ENCODE measurements at regions of chr4 and their contacts with region 1.

Region 1: GRCh38 chr4:54233277-54233696 is 4.2 kb downstream of the PDGFRA start:
- DNase-seq: peak; percentile 68
- ATAC-seq: peak; percentile 80
- H3K4me3 Mint-ChIP-seq: peak overlapping the region; percentile 82
- H3K27ac Mint-ChIP-seq: no peak overlapping the region
- H3K4me1 Mint-ChIP-seq: peaks cover 30% of the 10 kb centered on the region
- H3K27me3 Mint-ChIP-seq: peaks cover 54% of the 10 kb centered on the region
- CTCF ChIP-seq: peak; percentile 17

Region 2: DNA sequence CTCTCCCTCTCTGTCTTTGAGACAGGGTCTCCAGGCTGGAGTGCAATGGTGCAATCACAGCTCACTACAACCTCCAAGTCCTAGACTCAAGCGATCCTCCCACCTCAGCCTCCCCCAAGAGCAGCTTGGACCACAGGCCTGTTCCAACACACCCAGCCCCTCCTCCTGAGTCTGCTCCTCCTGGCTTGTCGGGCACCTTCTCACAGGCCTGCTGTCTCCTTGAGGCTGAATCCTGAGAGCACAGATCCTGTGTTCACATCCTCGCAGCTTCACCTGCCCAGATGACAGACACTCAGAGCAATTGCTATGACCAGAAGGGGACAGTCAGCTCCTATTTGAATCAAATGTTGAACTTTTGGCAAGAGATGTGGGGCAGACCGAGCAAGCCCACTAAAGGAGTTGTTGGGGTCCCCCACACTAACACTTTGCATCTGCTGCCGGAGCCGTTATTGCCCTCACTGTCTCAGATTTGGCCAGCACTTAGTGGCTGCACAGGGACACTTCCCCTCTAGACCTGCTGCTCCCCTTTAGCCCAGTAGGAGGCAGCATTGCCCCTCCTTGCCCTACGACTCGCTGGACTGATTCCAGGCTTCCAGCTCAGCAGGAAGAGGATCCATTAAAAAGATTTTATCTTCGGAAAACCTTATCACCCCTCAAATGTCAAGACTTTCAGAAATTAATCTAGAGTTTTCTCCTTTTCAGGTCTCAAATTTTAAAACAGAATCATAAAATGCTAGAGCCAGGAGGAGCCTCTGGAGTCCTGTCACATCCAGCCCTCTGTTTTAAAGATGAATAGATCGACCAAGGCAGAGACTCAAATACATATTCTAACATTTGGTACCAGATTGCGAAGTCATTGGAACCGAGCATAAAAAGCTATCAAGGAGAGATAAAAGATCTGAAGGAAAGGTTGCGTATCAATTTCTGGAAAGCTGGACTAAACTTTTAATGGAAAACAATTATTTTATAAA is 1687.9 kb before region 1 on chr4:
- CTCF ChIA-PET with region 1: interaction called, 11 read pairs
- POLR2A ChIA-PET with region 1: no interaction called
- intact Hi-C with region 1: loop called (anchors 2 kb)
- DNase-seq: peak; percentile 47
- ATAC-seq: peak; percentile 65
- H3K4me3 Mint-ChIP-seq: no peak overlapping the region
- H3K27ac Mint-ChIP-seq: no peak overlapping the region
- H3K4me1 Mint-ChIP-seq: no peaks in the 10 kb centered on the region
- H3K27me3 Mint-ChIP-seq: peaks cover 5% of the 10 kb centered on the region
- CTCF ChIP-seq: no peak

Region 3: DNA sequence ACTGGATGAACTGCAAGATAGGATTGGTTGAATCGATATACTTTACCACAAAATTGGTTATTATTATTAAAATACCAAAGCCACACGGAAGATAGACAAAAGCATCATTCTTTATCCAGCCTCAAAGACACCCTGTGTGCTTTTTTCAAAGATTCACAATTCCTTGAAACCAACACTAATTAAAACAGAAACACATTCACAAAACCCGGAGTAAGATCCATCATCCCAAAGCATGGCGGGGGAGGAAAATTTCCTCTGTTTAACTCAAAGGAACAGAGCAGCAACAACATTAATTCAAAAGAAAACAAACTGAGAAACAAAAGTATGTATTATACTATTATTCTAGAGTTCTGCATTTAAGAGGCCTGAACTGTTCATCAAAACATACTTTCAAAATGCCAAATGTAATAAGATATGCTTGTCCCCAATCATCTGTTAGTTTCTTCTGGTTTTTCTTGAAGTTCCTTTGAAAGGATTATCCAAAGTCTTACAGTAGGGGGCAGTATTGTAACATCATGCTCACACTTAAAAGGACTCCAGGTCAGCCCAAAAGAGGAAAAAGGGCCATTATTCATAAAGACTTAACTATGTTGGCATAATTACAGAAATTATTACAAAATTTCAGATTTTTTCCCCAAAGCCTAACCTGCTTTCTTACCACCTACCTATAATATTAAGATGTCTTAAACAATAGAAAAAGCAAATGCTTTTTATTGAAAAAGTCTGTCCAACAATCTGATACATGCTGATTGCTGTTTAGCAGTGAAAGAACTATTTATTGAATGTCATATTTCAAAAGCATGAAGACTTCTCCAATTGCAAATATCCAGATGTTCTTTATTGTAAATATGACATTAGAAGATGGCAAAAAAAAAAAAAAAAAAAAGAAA is 1036.2 kb before region 1 on chr4:
- CTCF ChIA-PET with region 1: interaction called, 8 read pairs
- POLR2A ChIA-PET with region 1: no interaction called
- intact Hi-C with region 1: loop called (anchors 1 kb)
- DNase-seq: no peak
- ATAC-seq: no peak
- H3K4me3 Mint-ChIP-seq: no peak overlapping the region
- H3K27ac Mint-ChIP-seq: no peak overlapping the region
- H3K4me1 Mint-ChIP-seq: peaks cover under 1% of the 10 kb centered on the region
- H3K27me3 Mint-ChIP-seq: no peaks in the 10 kb centered on the region
- CTCF ChIP-seq: no peak

Region 4: DNA sequence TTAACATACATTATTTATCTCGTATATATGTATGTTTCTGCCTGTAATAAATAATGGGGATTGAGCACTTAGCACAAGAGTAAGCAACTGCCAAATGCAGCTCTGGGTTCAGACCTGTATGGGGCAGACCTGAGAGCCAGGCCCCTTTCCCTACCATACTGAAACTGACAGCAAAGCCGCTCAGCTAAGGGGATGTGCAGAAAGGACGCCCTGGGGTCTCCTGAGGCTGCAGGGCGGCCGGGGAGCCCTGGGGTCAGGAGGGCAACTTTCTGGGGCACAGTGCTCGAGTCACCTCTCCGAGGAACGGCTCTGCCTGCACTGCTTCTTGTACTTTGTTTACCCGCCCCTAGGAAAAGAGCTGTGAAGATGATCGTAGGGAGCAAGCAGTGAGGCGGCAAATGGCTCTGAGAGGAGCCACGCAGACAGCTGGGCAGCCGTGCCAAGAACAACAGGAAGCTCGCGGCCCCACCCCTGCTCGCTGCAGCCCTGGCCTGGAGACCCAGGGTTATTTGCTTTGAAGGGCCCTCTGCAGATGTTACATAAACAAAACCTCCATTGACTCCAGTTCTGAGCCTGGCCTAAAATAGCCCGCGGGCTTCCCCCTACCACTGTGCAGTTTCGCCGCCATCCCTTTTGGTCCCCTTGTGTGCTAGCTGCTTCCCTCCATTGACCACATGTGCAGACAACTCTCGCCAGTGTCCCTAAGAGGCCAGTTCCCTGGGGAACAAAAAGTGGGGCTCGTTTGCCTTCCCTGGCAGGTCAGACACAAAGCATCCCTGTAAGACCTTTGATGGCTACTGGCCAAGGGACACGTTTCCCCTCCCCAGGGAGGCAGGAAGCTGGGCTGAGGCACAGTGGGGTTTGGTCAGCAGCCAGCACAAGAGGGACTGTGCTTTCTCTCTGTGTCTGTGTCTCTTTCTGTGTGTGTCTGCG is 530.7 kb before region 1 on chr4:
- CTCF ChIA-PET with region 1: interaction called, 15 read pairs
- POLR2A ChIA-PET with region 1: no interaction called
- intact Hi-C with region 1: loop called (anchors 1 kb)
- DNase-seq: peak; percentile 25
- ATAC-seq: peak; percentile 64
- H3K4me3 Mint-ChIP-seq: peak overlapping the region; percentile 79
- H3K27ac Mint-ChIP-seq: peak overlapping the region; percentile 54
- H3K4me1 Mint-ChIP-seq: peaks cover 61% of the 10 kb centered on the region
- H3K27me3 Mint-ChIP-seq: no peaks in the 10 kb centered on the region
- CTCF ChIP-seq: no peak

Region 5: GRCh38 chr4:53929955-53930798 is 303.1 kb before region 1 on chr4:
- CTCF ChIA-PET with region 1: interaction called, 51 read pairs
- POLR2A ChIA-PET with region 1: no interaction called
- intact Hi-C with region 1: loop called (anchors 1 kb)
- DNase-seq: no peak
- ATAC-seq: no peak
- H3K4me3 Mint-ChIP-seq: no peak overlapping the region
- H3K27ac Mint-ChIP-seq: no peak overlapping the region
- H3K4me1 Mint-ChIP-seq: no peaks in the 10 kb centered on the region
- H3K27me3 Mint-ChIP-seq: peaks cover 9% of the 10 kb centered on the region
- CTCF ChIP-seq: no peak